ENCODE measurements at regions of chr9 and their contacts with region 1.

Region 1: DNA sequence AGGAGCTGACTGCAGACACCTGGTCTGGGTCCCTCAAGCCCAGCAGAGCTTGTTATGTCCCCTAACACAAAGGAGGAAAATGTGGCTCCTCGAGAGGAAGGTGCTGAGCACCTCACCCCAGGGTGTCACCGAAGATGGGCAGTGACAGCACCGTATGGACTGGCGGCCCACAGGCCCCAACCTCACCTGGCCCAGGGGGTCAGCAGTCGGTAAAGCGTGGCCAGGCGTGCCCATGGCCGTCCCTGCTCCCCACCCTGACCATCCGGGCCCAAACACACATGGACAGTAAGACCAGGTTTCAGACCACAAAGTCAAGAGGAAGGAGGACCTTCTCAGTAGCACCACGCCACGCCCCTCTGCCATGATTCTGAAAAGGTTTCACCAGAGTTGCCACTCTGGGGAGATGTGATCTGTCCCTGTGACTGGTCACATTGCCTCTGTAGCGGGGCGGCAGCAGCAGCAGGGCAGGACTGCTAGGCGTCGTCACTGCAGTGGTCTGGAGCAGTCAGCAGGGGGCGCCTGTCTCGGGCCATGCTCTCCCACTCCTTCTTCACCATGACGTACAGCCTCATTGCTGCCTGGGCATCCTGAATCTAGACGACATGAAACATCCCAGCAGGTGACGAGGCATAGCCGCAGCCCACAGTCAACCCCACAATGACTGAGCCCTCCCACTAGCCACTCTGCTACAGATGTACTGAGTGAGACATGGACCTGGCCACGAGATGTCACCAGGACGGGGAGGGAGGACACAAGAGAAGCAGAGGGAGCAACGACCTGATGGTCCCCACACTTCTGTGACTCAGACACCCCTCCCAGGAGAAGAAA is 11.1 kb downstream of the REXO4 start:
- DNase-seq: peak; percentile 75
- ATAC-seq: peak; percentile 74 to 82

Region 2: DNA sequence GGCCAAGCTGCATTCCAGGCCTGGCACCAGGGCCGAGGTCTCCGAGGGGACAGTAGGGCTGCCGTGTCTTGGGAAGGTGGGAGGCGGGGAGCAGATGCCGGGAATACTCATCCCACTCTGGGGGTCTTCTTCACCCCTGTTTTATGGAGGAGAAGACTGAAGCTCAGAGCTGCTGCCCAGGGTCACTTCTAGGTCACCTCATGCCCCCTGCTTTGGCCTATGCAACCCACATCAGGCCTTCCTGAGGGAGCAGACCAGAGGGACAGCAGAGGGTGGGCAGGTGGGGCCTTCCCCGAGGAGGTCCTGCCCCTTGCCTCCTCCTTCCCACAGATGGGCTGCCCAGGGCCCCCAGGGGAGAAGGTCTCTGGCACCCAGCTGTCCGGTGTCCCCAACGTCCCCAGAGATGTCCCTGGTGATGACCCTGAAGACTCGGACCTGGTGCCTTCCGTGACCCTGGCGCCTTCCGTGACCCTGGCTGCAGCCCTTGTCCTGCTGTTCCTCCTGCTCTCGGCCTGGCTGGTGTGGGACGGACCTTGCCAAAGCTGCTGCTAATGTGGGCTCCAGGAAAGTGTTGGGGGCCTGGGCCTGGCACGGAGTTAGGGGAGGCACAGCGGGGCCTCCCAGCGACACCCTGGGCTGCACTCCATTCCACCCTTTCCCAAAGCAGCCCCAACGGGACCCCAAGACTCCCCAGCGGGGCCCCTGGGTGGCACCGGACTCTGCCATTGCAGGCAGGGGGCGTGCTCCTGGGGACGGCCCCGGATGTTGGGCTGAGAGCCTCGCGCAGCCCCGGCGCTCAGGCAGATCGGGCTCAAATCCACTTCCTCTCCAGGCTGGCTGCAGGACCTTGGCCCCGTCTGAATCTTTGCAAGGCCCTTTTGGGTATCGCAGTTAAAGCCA is 78.9 kb after region 1 on chr9:
- intact Hi-C with region 1: loop called (anchors 1 to 5 kb)
- DNase-seq: peak; percentile 20
- ATAC-seq: peak in 1 of 2 donors; percentile 5

Region 3: DNA sequence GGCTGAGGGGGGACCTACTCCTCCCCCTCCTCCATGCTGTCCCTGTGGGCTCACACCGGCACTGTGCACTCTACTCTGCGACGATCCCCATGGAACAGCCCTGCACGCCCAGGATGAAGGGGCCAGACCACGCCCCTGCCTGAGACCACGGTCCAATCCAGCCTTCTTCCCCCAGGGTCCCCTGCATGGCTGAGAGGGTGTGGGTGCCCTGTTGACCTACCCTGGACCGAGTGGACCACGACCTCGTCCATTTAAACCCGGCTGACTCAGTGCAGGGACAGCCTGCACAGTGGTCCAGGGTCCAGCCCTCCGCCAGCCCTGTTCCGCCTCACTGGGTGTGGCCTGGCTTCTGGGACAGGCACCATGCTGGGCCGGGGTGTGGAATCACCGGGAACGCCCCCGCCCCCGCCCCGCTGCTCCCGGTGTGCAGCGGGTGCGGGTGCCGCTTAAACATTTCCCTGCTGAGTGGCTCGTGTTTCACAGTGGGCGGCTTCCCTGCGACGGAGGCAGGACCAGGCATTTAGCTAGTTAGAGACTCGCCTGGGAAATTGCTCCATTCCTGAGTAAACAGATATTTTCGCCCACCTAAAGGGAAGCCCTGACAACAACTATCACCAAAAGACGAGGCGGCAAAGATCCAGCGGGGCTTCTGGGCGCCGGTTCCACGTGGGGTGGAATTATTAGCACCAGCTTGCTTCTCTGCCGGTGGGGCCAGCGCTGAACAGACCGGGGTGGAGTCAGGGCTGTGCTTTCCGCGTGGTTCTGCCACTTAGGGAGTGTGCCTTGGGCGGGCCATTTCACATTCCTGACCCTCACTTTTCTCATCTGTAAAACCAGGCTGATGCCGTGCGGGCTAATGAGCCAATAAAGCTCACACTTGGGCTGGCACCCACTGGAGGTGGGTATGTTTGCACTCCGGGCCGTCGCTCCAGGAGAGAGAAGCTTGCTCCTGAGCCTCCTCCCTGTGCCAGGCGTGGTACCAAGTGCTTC is 252.0 kb after region 1 on chr9:
- intact Hi-C with region 1: no loop called
- DNase-seq: peak; percentile 73
- ATAC-seq: peak; percentile 87 to 91